ENCODE measurements at regions of chr19 and their contacts with region 1.

Region 1: GRCh38 chr19:46840136-46840942 is 10.3 kb downstream of the AP2S1 start:
- DNase-seq: peak; percentile 68 to 69
- H3K4me3 ChIP-seq: no peak overlapping the region
- H3K4me3 Mint-ChIP-seq: no peak overlapping the region
- H3K27ac Mint-ChIP-seq: peak overlapping the region; percentile 45
- H3K4me1 ChIP-seq: peaks cover 17% of the 10 kb centered on the region
- H3K4me1 Mint-ChIP-seq: peaks cover 26% of the 10 kb centered on the region
- H3K27me3 ChIP-seq: no peaks in the 10 kb centered on the region
- H3K27me3 Mint-ChIP-seq: no peaks in the 10 kb centered on the region
- CTCF ChIP-seq: peak; percentile 91 to 94

Region 2: DNA sequence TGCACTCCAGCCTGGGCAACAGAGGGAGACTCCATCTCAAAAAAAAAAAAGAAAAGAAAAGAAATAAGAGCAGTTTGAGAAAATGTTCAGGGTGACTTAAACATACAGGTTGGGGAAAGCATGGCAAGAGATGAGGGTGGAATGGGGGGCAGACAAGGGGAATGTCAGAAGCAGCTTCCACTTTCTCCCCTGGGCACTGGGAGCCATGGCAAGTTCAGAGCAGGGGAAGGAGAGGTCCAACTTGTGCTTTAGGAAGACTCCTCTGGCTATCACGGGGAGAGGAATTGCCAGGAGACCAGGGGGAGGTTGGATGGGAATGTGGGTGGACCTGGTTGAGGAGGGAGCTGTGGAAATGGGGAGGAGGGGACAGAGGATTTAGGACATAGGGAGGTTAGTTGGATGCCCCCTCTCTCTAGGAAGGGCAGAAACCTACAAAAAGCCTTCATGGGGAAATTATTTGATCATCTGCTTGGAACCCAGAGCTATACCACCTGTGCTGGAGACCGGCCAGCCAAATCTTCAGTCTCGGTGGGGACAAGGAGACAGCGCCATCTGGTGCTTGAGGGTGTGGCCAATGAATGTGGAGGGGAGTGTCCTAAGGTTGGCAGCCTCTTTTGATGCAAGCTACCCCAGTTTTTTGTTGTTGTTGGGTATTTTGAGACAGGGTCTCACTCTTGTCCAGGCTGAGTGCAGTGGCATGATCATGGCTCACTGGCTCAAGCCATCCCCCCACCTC is 86.8 kb before region 1 on chr19:
- CTCF ChIA-PET with region 1: interaction called, 16 read pairs
- POLR2A ChIA-PET with region 1: interaction called, 5 read pairs
- intact Hi-C with region 1: loop called (anchors 1 kb)
- DNase-seq: peak in 1 of 2 experiments; percentile 64
- H3K4me3 ChIP-seq: no peak overlapping the region
- H3K4me3 Mint-ChIP-seq: no peak overlapping the region
- H3K27ac Mint-ChIP-seq: no peak overlapping the region
- H3K4me1 ChIP-seq: no peaks in the 10 kb centered on the region
- H3K4me1 Mint-ChIP-seq: no peaks in the 10 kb centered on the region
- H3K27me3 ChIP-seq: no peaks in the 10 kb centered on the region
- H3K27me3 Mint-ChIP-seq: no peaks in the 10 kb centered on the region
- CTCF ChIP-seq: peak; percentile 14 to 44

Region 3: GRCh38 chr19:46815833-46816627 is 24.3 kb before region 1 on chr19:
- CTCF ChIA-PET with region 1: interaction called, 10 read pairs
- POLR2A ChIA-PET with region 1: no interaction called
- intact Hi-C with region 1: no loop called
- DNase-seq: no peak
- H3K4me3 ChIP-seq: no peak overlapping the region
- H3K4me3 Mint-ChIP-seq: no peak overlapping the region
- H3K27ac Mint-ChIP-seq: no peak overlapping the region
- H3K4me1 ChIP-seq: peaks cover 8% of the 10 kb centered on the region
- H3K4me1 Mint-ChIP-seq: peaks cover 13% of the 10 kb centered on the region
- H3K27me3 ChIP-seq: no peaks in the 10 kb centered on the region
- H3K27me3 Mint-ChIP-seq: no peaks in the 10 kb centered on the region
- CTCF ChIP-seq: no peak

Region 4: DNA sequence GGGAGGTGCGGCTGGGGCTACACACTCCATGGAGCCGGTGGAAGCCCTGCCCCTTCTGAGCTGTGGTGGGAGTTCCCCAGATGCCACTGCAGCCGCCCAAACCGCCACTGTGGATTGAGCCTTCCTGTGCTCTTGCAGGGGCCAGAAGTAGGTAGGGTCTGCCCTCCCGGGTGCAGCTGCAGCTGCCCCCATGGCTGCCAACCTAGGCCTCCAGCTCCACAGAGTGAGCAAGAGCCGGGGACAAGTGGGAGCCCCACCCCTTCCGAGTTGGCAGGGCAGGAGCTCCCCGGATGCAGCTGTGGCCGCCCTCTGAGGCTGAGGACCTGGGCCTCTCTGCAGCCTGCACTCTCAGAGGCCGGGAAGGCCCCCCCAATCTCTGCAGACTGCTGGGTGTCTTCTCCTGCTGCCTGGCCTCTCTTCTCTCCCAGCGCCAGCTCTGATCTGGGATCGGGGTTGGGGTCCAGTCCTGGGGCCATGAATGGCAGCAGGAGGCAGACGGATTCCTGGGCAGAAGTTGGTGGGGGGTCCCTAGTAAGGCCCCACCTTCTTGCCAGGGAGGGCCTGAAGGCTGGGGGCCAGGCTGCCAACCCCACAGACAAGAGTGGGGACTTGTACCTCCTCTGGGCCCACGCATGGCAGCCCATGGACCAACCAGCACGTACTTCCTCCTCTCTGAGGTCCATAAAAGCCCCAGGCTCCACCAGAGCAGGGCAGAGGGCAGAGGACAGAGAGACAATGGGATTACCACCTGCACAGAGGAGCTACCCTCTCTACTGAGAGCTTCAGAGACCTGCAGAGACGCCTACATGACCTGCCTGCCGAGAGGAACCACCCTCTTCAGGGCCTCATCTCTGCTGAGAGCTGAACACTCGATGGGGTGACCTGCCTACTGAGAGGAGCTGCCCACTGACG is 18.6 kb before region 1 on chr19:
- CTCF ChIA-PET with region 1: interaction called, 17 read pairs
- POLR2A ChIA-PET with region 1: no interaction called
- intact Hi-C with region 1: no loop called
- DNase-seq: no peak
- H3K4me3 ChIP-seq: no peak overlapping the region
- H3K4me3 Mint-ChIP-seq: no peak overlapping the region
- H3K27ac Mint-ChIP-seq: no peak overlapping the region
- H3K4me1 ChIP-seq: peaks cover 16% of the 10 kb centered on the region
- H3K4me1 Mint-ChIP-seq: peaks cover 13% of the 10 kb centered on the region
- H3K27me3 ChIP-seq: no peaks in the 10 kb centered on the region
- H3K27me3 Mint-ChIP-seq: no peaks in the 10 kb centered on the region
- CTCF ChIP-seq: no peak

Region 5: DNA sequence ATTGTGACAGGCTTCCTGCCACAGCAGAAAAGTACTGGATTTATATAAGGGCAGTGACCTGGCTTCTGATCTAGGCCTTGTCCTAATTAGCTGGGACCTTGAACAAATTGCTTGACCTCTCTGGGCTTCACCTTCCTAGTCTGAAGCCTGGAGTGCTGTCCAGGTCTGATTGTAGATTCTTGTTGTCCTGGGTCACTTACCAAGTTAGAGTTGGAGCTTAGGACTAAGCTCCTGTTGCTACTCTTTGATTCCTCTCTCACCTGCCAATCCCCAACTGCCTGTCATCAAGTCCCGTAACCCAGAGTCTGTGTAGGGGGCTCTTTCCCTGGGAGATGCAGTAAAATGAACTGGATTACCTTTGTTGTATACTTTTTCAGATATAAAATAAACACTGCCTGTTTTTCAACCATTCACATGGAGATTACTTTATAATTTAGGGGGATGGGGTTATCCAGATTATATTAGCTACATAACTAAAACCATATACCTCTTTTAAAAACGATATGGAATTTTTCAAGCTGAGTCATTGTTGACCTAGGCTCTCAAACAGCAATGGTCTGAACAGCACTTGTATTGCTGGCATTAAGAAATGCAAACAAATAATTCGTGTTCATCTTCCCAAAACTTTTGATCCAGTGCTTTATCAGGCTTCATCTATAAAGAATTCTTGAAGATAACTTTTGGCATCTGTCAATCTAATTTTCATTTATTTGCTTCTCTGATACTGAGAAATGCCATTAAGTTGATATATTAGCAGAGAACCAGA is 26.2 kb after region 1 on chr19:
- CTCF ChIA-PET with region 1: no interaction called
- POLR2A ChIA-PET with region 1: no interaction called
- intact Hi-C with region 1: no loop called
- DNase-seq: peak in 1 of 2 experiments; percentile 33
- H3K4me3 ChIP-seq: no peak overlapping the region
- H3K4me3 Mint-ChIP-seq: peak overlapping the region; percentile 12
- H3K27ac Mint-ChIP-seq: peak overlapping the region; percentile 73
- H3K4me1 ChIP-seq: peaks cover 59% of the 10 kb centered on the region
- H3K4me1 Mint-ChIP-seq: peaks cover 20% of the 10 kb centered on the region
- H3K27me3 ChIP-seq: no peaks in the 10 kb centered on the region
- H3K27me3 Mint-ChIP-seq: no peaks in the 10 kb centered on the region
- CTCF ChIP-seq: no peak

Measured in Caco-2 (cell line).